Heart left ventricle (tissue), 16 donors: ENCODE measurements at regions of chr14 and their contacts with region 1.

Region 1: DNA sequence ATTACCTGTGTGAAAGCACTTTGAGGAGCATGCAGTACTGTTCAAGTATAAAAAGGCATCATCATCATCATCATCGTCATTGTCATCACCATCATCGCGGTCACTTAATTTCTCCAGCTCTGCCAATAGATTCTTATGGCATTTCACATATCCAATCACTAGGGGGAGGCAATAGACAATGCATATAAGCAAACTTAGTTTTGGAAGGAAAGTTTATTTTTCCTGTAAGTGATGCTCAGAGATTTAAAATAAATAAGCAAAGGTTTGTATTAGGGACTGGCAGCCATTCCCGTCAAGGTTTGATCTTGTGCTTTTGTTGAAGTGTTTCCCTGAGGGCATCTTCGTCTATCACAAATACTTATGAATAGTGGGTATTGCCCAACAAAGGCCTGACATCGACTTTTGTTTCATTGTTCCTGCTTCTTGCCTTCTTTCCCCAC is 127.4 kb downstream of the KTN1 start:
- DNase-seq: no peak
- ATAC-seq: peak in 2 of 4 donors; percentile 20 to 57
- H3K4me3 ChIP-seq: no peak overlapping the region
- H3K27ac ChIP-seq: no peak overlapping the region
- H3K4me1 ChIP-seq: peaks cover 0 to 10% (median 2%) of the 10 kb centered on the region in 12 donors
- H3K27me3 ChIP-seq: no peaks in the 10 kb centered on the region
- CTCF ChIP-seq: peak; percentile 42 to 79 (median 68)
- POLR2A ChIP-seq: no peak

Region 2: DNA sequence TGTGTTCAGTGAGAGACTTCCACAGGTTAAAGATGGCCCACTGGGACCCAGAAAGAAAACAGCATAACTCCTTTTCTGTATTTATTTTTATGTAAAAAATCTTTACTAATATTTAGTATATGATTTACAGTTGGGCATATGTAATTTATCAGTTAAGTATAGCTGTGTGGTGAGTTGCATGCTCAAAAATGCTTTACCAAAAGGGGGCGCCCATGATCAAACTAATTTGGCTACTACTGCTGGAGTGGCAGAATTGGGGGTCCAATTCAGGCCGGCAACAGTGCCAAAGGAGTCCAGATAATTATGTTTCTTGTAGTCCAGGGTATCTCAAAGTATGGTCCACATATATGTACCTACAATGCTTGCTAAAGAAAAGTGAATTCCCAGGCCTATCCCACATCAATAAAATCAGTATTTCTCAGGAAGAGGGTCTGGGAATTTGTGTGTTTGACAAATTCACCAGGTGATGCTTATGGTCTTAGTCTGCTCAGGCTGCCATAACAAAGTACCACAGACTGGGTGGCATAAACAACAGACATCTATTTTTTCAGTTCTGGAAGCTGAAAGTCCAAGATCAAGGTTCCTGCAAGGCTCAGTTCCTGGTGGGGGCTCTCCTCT is 24.6 kb after region 1 on chr14:
- intact Hi-C with region 1: no loop called
- DNase-seq: peak in 1 of 5 donors; percentile 32
- ATAC-seq: no peak
- H3K4me3 ChIP-seq: no peak overlapping the region
- H3K27ac ChIP-seq: no peak overlapping the region
- H3K4me1 ChIP-seq: no peaks in the 10 kb centered on the region
- H3K27me3 ChIP-seq: no peaks in the 10 kb centered on the region
- CTCF ChIP-seq: peak; percentile 35 to 70 (median 58)
- POLR2A ChIP-seq: no peak

Region 3: DNA sequence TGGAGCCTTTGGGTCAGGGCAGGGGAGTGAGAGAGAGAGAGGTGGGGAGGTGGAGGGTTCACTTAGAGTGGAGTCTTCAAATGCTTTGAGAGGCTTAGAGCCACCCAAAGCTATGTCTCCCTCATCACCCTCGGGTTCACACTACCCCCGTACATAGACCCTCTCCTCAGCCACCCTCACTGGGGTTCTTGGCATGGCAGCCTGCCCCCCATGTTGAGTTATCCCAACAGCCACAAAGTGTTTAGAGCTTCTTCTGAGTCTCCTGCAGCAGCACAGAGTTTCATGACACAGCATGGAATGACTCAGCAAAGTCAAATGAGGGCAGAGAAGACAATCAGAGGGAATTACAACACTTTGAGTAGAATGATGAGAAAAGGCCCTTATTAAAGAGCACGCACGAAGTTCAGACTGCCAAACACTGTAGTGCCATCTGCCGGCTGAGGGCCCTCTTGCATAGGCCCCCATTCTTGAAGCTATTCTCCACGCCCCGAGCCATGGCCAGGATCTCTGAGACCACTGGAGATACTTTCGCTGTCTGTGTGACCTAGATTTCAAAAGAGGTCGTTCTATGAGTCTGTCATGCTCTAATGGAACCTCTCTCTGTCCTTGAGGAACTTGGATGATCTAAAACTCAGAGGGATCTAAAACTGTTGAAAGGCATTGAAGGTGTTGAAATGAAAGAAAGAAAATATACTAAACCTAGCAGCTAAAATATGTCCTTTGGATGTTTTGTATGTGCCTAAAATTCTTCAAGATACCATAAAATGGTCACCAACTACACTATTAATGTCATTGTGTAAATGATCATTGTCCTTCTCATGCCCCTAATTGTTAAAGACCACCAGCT is 632.7 kb after region 1 on chr14:
- intact Hi-C with region 1: loop called in 9 of 10 experiments (anchors 1 to 10 kb)
- DNase-seq: peak; percentile 67 to 80 (median 73)
- ATAC-seq: peak; percentile 84 to 95 (median 91)
- H3K4me3 ChIP-seq: no peak overlapping the region
- H3K27ac ChIP-seq: peak overlapping the region in 1 of 12 donors; percentile 8
- H3K4me1 ChIP-seq: peaks cover 0 to 33% (median 21%) of the 10 kb centered on the region in 12 donors
- H3K27me3 ChIP-seq: no peaks in the 10 kb centered on the region
- CTCF ChIP-seq: peak; percentile 65 to 92 (median 82)
- POLR2A ChIP-seq: no peak

Region 4: DNA sequence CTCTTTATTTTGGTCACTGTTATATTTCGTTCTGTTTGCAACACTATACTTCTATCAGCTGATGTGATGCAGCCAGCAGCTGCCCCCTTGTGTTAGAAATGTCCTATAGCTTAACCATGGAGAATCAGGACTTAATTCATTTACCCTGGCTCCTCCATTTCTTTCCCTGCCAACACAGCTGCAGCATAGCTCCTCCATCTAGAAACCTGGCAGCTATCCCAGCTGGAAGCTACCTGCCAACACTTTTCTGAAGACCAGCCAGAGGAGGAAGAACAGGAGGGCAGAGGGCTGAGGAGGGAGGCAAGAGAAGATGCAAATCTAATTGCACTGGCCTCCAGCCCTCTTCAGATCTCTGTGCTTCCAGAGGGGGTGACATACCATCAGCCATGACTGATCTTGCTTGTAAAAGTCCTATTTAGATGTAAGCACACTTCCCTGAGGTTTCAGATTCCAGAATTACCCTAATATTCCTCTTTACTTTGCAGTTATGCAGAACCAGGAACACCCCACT is 715.4 kb after region 1 on chr14:
- intact Hi-C with region 1: loop called in 7 of 10 experiments (anchors 5 to 10 kb)
- DNase-seq: peak in 4 of 5 donors; percentile 45 to 57 (median 48)
- ATAC-seq: peak; percentile 69 to 94 (median 88)
- H3K4me3 ChIP-seq: no peak overlapping the region
- H3K27ac ChIP-seq: no peak overlapping the region
- H3K4me1 ChIP-seq: peaks cover 0 to 20% (median 0%) of the 10 kb centered on the region in 12 donors
- H3K27me3 ChIP-seq: no peaks in the 10 kb centered on the region
- CTCF ChIP-seq: peak; percentile 56 to 80 (median 66)
- POLR2A ChIP-seq: no peak